ENCODE measurements at regions of chr9 and their contacts with region 1.

Region 1: GRCh38 chr9:19184144-19184917 is 46.2 kb upstream of the DENND4C start:
- DNase-seq: peak; percentile 92
- H3K4me3 ChIP-seq: no peak overlapping the region
- H3K27ac ChIP-seq: peak overlapping the region; percentile 96
- H3K4me1 ChIP-seq: peaks cover 32% of the 10 kb centered on the region
- H3K27me3 ChIP-seq: no peaks in the 10 kb centered on the region
- CTCF ChIP-seq: no peak
- POLR2A ChIP-seq: no peak

Region 2: GRCh38 chr9:18473652-18474279 is 710.6 kb before region 1 on chr9 and contains the start of gene ADAMTSL1:
- CTCF ChIA-PET with region 1: no interaction called
- POLR2A ChIA-PET with region 1: no interaction called
- dilution Hi-C with region 1: no loop called
- intact Hi-C with region 1: loop called (anchors 5 kb)
- DNase-seq: peak; percentile 93
- H3K4me3 ChIP-seq: peak within 1 kb of the TSS; percentile 35 to 51 (median 38)
- H3K27ac ChIP-seq: peak within 1 kb of the TSS; percentile 48
- H3K4me1 ChIP-seq: peaks cover 37% of the 10 kb centered on the region
- H3K27me3 ChIP-seq: no peaks in the 10 kb centered on the region
- CTCF ChIP-seq: no peak
- POLR2A ChIP-seq: peak; percentile 33
- total RNA-seq, gene ADAMTSL1: 16.9 and 18.4 TPM in 2 replicates

Region 3: DNA sequence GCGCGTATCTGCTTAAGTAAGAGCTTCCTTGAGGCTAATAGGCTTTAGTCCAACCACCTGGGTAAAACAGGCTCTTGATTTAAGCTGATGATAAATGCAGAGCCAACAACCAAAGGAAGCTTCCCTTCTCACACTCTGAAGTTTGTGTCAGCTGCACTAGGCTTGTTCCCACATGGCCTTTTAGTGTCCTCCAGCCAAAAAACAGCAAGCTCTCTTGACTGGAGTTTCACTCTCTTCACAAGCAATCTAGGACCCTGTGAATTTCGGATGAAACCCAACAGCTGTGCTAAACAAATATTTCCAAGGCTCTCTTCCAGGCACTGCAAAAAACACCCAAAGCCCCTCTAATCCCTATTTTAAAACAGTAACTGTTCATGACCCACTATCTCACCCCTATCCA is 215.2 kb before region 1 on chr9:
- CTCF ChIA-PET with region 1: no interaction called
- POLR2A ChIA-PET with region 1: no interaction called
- dilution Hi-C with region 1: no loop called
- intact Hi-C with region 1: no loop called
- DNase-seq: no peak
- H3K4me3 ChIP-seq: no peak overlapping the region
- H3K27ac ChIP-seq: no peak overlapping the region
- H3K4me1 ChIP-seq: no peaks in the 10 kb centered on the region
- H3K27me3 ChIP-seq: peaks cover 7 to 19% of the 10 kb centered on the region in 2 experiments
- CTCF ChIP-seq: no peak
- POLR2A ChIP-seq: no peak

Region 4: GRCh38 chr9:19127881-19128500 is 56.3 kb before region 1 on chr9:
- CTCF ChIA-PET with region 1: no interaction called
- POLR2A ChIA-PET with region 1: no interaction called
- dilution Hi-C with region 1: no loop called
- intact Hi-C with region 1: loop called (anchors 1 kb)
- DNase-seq: peak; percentile 59
- H3K4me3 ChIP-seq: peak overlapping the region; percentile 43 to 87 (median 75)
- H3K27ac ChIP-seq: peak overlapping the region; percentile 76
- H3K4me1 ChIP-seq: peaks cover 29% of the 10 kb centered on the region
- H3K27me3 ChIP-seq: no peaks in the 10 kb centered on the region
- CTCF ChIP-seq: no peak
- POLR2A ChIP-seq: no peak

Region 5: DNA sequence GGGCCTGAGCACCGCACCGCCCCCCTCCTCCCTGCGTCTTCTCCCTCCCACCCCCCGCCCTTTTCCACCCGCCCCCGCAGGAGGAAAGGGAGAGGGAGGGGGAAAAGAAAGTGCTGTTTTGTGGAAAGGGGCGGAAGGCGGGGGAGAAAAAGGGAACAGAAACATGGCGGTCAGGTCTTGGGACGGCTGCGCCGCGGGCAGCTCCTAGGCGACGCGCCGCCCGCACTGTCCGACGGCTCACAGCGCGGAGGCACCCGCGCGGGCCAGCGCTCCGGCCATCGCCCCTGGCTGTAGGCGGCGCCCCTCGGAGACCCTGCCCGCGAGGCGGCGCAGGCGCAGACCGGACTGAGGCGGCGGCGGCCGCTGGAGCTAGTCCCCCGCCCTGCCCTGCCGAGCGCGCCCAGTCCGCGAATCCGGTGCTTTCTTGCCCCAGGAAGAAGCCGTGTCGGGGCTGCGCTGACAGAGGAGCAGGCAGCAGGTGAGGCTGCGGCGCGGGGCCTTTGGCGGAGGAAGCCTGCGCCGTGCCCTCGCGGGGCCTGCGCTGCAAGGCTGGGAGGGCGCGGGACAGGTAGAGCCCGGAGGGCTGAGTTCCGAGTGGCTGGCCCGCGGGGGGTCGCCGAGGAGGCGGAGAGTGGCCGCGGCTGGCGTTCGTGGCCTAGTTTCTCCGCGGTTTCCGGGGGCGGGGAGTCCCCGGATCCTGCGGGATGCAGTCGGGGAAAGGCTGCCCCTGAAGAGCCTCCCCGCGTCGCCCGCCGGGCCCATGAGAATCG is 46.2 kb after region 1 on chr9 and contains the start of gene DENND4C:
- CTCF ChIA-PET with region 1: interaction called, 9 read pairs
- POLR2A ChIA-PET with region 1: no interaction called
- dilution Hi-C with region 1: no loop called
- intact Hi-C with region 1: loop called (anchors 1 kb)
- DNase-seq: peak; percentile 90
- H3K4me3 ChIP-seq: peak within 1 kb of the TSS; percentile 65 to 99 (median 97)
- H3K27ac ChIP-seq: peak within 1 kb of the TSS; percentile 86
- H3K4me1 ChIP-seq: peaks cover 19% of the 10 kb centered on the region
- H3K27me3 ChIP-seq: no peaks in the 10 kb centered on the region
- CTCF ChIP-seq: no peak
- POLR2A ChIP-seq: peak; percentile 87
- total RNA-seq, gene DENND4C: 36.5 and 36.8 TPM in 2 replicates

Region 6: DNA sequence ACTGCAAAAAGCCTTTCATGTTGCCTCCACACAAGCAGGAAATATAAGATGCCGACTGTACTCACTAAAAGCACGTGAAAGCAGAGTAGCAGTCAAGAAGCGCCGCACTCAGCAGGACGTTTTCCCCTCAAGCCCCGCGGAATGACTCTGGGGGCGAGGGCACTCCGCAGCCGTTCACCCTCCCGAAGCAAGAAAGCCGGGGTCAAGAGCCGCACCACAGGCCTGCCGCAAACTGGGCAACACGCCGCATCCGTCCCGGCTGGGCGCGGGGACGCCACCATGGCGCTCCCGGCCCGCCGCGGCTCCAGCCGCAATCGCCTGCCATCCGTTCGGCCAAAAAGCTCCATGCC is 195.3 kb after region 1 on chr9:
- CTCF ChIA-PET with region 1: no interaction called
- POLR2A ChIA-PET with region 1: no interaction called
- dilution Hi-C with region 1: no loop called
- intact Hi-C with region 1: loop called (anchors 2 kb)
- DNase-seq: peak; percentile 69
- H3K4me3 ChIP-seq: peak overlapping the region; percentile 84 to 94 (median 93)
- H3K27ac ChIP-seq: peak overlapping the region; percentile 62
- H3K4me1 ChIP-seq: peaks cover 37% of the 10 kb centered on the region
- H3K27me3 ChIP-seq: no peaks in the 10 kb centered on the region
- CTCF ChIP-seq: no peak
- POLR2A ChIP-seq: no peak